Activated B cell treated with CpG ODN at 0.5 μM for 24 hours (primary cell): ENCODE measurements at regions of chr20 and their contacts with region 1.

Region 1: DNA sequence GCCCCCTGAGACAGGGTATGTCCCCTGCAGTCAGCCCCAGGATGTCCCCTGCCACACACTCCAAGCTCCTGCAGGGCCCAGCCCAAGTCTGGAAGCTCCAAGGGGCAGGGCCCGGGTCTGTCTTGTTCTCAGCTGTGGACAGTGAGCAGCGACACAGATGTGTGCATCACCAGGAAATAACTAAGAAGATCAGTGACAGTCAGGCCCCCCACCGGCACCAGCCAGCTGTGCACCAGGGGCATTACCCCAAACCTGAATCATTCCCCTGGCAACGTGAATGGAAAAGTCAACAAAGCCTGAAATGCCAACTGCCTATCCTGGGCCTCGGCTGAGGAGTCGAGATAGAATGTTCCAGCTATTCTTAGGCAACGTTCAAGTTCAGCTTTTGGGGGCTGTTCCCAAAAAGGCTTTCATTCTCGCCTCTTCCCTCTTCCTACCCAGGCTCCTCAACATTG is 105.0 kb downstream of the PREX1 start:
- DNase-seq: no peak
- ATAC-seq: peak; percentile 52
- H3K4me3 Mint-ChIP-seq: peak overlapping the region; percentile 47
- H3K27ac Mint-ChIP-seq: peak overlapping the region; percentile 84
- H3K4me1 Mint-ChIP-seq: peaks cover 70% of the 10 kb centered on the region
- H3K27me3 Mint-ChIP-seq: no peaks in the 10 kb centered on the region
- CTCF ChIP-seq: no peak

Region 2: GRCh38 chr20:48711693-48712456 is 10.9 kb before region 1 on chr20:
- CTCF ChIA-PET with region 1: no interaction called
- POLR2A ChIA-PET with region 1: interaction called, 15 read pairs
- intact Hi-C with region 1: loop called (anchors 1 kb)
- DNase-seq: no peak
- ATAC-seq: peak; percentile 23
- H3K4me3 Mint-ChIP-seq: peak overlapping the region; percentile 74
- H3K27ac Mint-ChIP-seq: peak overlapping the region; percentile 87
- H3K4me1 Mint-ChIP-seq: peaks cover 83% of the 10 kb centered on the region
- H3K27me3 Mint-ChIP-seq: no peaks in the 10 kb centered on the region
- CTCF ChIP-seq: no peak

Region 3: DNA sequence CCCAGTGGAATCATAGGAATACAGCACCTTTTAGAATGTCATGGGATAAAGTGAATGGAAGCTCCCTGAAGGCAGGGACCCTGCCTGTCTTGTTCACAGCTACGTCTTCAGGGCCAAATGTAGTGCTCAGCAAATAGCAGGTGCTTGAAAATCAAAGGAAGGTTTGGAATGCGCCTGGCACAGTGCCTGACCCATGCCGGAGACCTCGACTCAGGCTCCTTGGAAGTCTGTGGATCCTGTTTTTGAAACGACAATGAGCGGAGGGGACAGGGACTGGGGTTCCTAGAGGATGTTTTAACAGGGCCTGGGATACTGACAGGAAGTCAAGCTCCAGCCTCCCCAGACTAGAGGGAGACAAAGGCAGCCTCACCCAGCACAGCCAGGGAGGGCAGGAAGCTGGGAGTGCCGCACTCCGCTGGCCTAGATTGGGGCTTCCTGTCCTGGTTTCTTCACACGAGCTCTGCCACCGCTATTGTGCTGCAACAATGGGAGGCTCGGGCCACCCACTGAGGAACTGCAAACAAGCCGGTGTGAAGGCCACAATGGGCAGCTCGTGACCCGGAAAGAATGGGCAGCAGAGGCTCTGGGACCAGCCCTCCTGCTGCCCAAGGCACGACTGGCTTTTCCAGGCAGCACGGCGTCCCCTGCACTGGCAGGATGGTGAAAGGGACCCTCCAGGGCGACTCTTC is 28.3 kb after region 1 on chr20:
- CTCF ChIA-PET with region 1: no interaction called
- POLR2A ChIA-PET with region 1: no interaction called
- intact Hi-C with region 1: loop called (anchors 5 kb)
- DNase-seq: no peak
- ATAC-seq: peak; percentile 23
- H3K4me3 Mint-ChIP-seq: no peak overlapping the region
- H3K27ac Mint-ChIP-seq: peak overlapping the region; percentile 88
- H3K4me1 Mint-ChIP-seq: peaks cover 84% of the 10 kb centered on the region
- H3K27me3 Mint-ChIP-seq: no peaks in the 10 kb centered on the region
- CTCF ChIP-seq: no peak

Region 4: GRCh38 chr20:48769069-48769879 is 46.5 kb after region 1 on chr20:
- CTCF ChIA-PET with region 1: no interaction called
- POLR2A ChIA-PET with region 1: interaction called, 20 read pairs
- intact Hi-C with region 1: no loop called
- DNase-seq: no peak
- ATAC-seq: peak; percentile 51
- H3K4me3 Mint-ChIP-seq: peak overlapping the region; percentile 53
- H3K27ac Mint-ChIP-seq: peak overlapping the region; percentile 82
- H3K4me1 Mint-ChIP-seq: peaks cover 91% of the 10 kb centered on the region
- H3K27me3 Mint-ChIP-seq: no peaks in the 10 kb centered on the region
- CTCF ChIP-seq: no peak

Region 5: DNA sequence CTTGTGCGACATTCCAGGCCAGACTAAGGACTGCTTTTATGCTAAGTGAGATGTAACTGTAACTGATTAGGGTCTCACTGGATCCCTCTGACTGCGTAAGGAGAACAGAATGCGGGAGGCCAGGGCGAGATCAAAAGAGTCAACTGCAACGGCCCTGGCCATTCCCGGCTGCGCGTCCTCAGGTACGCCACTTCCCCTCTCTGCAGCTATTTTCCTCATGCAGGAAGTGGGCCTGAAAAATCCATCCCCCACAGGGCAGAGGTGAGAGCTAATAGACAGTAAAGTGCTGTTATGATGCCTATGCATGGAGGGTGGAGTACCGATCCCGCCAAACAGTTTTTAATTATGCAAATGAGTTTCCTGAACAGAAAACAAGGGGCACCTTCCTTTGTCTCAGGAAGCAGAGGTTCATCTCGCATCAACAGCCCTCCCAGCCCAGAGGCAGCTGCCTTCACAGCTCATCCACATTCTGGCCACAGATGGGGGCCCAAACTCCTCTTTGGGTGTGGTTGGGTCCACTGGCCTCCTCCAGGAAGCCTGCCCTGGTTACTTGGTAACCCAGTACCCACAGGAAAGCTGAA is 95.7 kb after region 1 on chr20:
- CTCF ChIA-PET with region 1: no interaction called
- POLR2A ChIA-PET with region 1: interaction called, 5 read pairs
- intact Hi-C with region 1: loop called (anchors 1 kb)
- DNase-seq: no peak
- ATAC-seq: peak; percentile 49
- H3K4me3 Mint-ChIP-seq: peak overlapping the region; percentile 63
- H3K27ac Mint-ChIP-seq: peak overlapping the region; percentile 89
- H3K4me1 Mint-ChIP-seq: no peaks in the 10 kb centered on the region
- H3K27me3 Mint-ChIP-seq: no peaks in the 10 kb centered on the region
- CTCF ChIP-seq: no peak

Region 6: DNA sequence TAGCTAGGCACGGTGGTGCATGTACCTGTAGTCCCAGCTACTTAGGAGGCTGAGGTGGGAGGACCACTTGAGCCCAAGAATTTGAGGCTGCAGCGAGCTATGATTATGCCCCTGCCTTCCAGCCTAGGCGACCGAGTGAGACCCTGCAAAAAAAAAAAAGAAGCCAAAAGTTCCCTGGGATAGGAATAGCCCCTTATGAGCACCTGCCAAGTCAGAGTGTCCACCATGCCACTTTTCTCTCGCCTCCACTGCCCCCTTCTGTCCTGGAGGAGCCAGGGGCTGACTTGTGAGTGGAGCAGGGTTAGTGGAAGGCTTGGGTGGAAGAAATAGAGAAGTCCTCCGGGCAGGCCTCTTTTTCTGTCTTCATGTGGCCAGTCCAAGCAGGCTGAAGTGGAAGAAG is 484.3 kb after region 1 on chr20:
- CTCF ChIA-PET with region 1: no interaction called
- POLR2A ChIA-PET with region 1: no interaction called
- intact Hi-C with region 1: loop called (anchors 10 kb)
- DNase-seq: no peak
- ATAC-seq: no peak
- H3K4me3 Mint-ChIP-seq: no peak overlapping the region
- H3K27ac Mint-ChIP-seq: no peak overlapping the region
- H3K4me1 Mint-ChIP-seq: no peaks in the 10 kb centered on the region
- H3K27me3 Mint-ChIP-seq: no peaks in the 10 kb centered on the region
- CTCF ChIP-seq: no peak